ENCODE measurements at regions of chr10 and their contacts with region 1.

Region 1: GRCh38 chr10:92208736-92209327 is 82.0 kb downstream of the CPEB3 start:
- DNase-seq: peak; percentile 8
- ATAC-seq: no peak
- H3K4me3 Mint-ChIP-seq: no peak overlapping the region
- H3K27ac Mint-ChIP-seq: no peak overlapping the region
- H3K4me1 Mint-ChIP-seq: peaks cover 12% of the 10 kb centered on the region
- H3K27me3 Mint-ChIP-seq: no peaks in the 10 kb centered on the region

Region 2: DNA sequence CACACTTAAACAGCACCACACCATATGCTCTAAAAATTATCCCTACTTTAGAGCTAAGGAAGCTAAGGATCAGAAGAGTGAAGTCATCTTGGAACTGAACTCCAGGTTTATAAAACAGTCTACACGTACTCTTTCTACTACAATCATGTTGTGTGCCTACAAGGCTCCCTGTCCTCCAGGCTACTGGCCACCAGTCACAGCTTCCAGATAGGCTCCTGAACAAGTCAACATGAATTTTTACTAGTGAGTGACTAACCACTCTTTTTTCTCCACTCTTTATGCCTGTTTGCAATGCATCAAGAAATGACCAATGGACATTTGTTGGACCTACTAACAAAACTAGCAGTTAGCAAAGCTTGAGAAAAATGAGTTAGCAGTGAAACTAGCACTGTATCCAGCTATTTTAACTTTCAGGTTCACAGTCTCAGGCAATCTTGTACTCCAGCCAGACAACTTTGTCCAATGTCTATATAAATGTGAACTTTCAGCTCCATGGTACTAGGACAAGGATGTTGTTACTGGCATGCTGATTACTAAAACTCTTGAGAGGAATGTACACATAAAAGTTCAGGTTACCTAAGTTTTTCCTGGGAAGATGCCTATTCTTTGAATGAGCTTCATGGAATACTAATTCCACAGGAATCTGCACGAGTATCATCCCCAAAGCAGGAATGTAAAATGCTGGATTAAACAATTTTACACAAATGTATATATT is 105.3 kb before region 1 on chr10:
- CTCF ChIA-PET with region 1: interaction called, 3 read pairs
- POLR2A ChIA-PET with region 1: no interaction called
- intact Hi-C with region 1: loop called (anchors 1 kb)
- DNase-seq: no peak
- ATAC-seq: no peak
- H3K4me3 Mint-ChIP-seq: no peak overlapping the region
- H3K27ac Mint-ChIP-seq: no peak overlapping the region
- H3K4me1 Mint-ChIP-seq: peaks cover 15% of the 10 kb centered on the region
- H3K27me3 Mint-ChIP-seq: no peaks in the 10 kb centered on the region

Region 3: DNA sequence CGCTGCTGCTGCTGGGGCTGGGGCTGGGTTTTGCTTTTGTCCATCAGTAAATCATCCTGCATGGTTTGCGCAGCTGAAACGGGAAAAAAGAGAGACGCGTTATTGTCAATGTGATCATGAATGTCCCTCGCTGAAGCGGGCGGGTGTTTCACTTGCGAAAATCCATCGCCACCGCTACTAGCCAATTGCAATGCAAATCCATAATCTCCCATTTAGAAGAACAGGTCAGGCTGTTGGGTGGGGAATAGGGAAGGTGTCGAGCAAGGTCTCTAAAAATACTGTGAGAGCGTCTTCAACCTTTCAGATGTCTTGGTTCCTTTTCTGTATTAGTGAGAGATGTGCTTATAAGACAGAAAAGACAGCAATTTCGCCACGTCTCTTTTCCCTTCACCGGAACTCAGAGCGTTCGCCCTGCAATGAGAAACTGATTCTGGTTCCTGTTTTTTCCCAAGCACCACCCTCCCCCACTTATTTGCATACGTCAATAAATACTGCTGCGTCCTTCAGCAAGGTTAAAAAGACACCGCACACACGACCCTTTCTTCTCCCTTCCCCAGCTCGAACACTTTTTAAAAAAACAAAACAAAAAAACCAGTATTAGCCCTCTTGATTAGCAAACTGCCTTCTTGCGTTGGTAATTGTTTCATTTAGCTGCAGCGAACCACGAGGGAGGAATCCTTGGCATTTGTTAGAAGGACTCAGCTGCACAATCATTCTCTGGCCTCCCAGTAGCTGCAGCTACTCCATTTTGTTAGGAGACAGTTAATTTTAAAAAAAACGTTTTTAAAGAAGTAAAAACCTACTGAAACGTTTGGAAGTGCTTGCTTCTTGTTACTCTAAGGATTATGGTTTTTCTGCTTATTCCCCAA is 31.7 kb after region 1 on chr10:
- CTCF ChIA-PET with region 1: no interaction called
- POLR2A ChIA-PET with region 1: no interaction called
- intact Hi-C with region 1: loop called in 1 of 2 experiments (anchors 2 kb)
- DNase-seq: peak; percentile 33
- ATAC-seq: peak; percentile 28
- H3K4me3 Mint-ChIP-seq: peak overlapping the region; percentile 72
- H3K27ac Mint-ChIP-seq: peak overlapping the region; percentile 2
- H3K4me1 Mint-ChIP-seq: peaks cover 30% of the 10 kb centered on the region
- H3K27me3 Mint-ChIP-seq: peaks cover 14% of the 10 kb centered on the region

Region 4: DNA sequence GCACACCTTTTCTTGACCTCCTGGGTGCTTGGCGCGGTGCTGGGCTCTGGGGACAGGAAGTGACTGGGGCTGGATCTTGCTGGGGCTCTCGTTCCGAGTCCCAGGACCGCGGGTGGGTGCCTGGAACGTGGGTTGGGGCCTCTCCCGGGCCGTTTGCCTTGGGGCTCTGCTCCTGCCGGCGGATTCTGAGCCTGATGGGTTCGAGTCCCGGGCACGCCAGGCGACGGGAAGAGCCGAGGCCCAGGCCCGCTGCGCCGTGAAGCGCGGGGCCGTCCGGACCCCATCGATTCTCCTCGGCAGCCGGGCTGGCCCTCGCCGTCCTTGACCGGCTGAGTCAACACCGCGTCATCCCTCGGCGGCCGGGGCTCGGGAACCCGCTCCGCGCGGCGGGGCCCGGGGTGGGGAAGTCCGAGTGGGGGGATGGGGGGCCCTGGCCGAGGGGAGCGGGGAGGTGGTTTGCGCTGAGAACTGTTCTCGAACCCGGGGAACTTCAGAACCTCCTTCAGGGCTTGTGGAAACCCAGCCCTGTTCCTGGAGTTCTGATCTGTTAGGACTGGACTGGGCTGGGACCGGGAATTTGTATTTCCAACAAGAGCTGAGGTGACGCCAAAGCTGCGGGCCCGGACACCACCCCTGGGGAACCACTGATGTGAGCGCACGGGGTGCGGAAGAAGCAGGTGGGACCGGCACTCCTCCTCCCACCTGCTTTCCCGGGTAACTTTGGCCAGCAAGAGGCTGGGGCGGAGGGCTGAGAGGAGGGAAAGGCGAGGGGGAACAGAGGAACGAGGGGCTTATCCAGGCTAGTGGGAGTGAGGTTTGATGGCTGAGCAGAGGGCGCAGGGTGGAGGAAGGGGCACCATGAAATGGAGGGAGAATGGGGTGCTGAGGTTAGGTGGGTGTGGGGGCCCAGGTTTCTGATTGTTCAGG is 487.1 kb after region 1 on chr10:
- CTCF ChIA-PET with region 1: no interaction called
- POLR2A ChIA-PET with region 1: no interaction called
- intact Hi-C with region 1: no loop called
- DNase-seq: no peak
- ATAC-seq: no peak
- H3K4me3 Mint-ChIP-seq: no peak overlapping the region
- H3K27ac Mint-ChIP-seq: no peak overlapping the region
- H3K4me1 Mint-ChIP-seq: peaks cover 33% of the 10 kb centered on the region
- H3K27me3 Mint-ChIP-seq: peaks cover 61% of the 10 kb centered on the region